ENCODE measurements at regions of chr11 and their contacts with region 1.

Region 1: DNA sequence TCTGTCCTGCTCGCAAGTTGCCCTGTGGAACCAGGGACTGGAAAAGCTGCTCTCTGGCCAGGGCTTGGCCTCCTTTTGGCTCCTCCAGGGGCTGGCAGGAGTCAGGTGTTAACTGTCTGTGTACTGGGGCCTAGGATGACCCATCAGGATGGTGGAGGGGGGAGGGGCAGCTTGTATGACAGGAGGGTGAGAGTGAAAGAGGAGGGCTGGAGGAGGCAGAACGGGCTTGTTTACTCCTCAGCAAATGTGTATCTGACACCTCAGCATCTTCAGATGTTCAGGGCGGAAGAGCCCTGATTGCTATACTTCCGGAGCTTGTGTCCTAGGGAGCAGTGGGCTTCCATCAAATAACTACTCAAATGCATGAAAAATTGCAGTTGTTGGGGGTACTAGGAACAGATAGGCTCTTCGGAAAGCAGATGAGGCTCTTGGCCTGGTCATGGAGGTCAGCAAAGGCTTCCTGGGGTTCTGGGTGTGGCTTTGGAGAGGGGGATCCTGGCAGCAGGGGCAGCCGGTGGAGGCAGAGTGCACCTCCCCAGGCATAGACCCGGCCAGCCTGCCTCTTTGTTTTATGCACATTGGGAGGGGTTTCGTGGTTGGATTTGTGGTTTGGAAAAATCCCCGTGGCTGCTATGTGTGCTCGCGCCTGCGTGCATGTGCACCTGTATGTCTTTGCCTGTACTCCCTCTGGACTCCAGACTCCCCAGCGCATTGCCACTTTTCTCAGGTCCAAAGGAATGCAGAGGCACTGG is 31.2 kb downstream of the CD82 start:
- DNase-seq: peak; percentile 77
- ATAC-seq: peak; percentile 86
- H3K4me3 Mint-ChIP-seq: peak overlapping the region; percentile 50
- H3K27ac Mint-ChIP-seq: peak overlapping the region; percentile 90
- H3K4me1 Mint-ChIP-seq: peaks cover 65% of the 10 kb centered on the region
- H3K27me3 Mint-ChIP-seq: no peaks in the 10 kb centered on the region

Region 2: GRCh38 chr11:44565211-44565952 is 31.3 kb before region 1 on chr11 and contains the start of gene CD82:
- CTCF ChIA-PET with region 1: interaction called, 10 read pairs
- POLR2A ChIA-PET with region 1: interaction called, 15 read pairs
- DNase-seq: peak; percentile 99
- ATAC-seq: peak; percentile 88
- H3K4me3 Mint-ChIP-seq: peak within 1 kb of the TSS; percentile 87
- H3K27ac Mint-ChIP-seq: peak within 1 kb of the TSS; percentile 84
- H3K4me1 Mint-ChIP-seq: peaks cover 72% of the 10 kb centered on the region
- H3K27me3 Mint-ChIP-seq: no peaks in the 10 kb centered on the region
- total RNA-seq, gene CD82: 68.2 to 72.9 TPM

Region 3: DNA sequence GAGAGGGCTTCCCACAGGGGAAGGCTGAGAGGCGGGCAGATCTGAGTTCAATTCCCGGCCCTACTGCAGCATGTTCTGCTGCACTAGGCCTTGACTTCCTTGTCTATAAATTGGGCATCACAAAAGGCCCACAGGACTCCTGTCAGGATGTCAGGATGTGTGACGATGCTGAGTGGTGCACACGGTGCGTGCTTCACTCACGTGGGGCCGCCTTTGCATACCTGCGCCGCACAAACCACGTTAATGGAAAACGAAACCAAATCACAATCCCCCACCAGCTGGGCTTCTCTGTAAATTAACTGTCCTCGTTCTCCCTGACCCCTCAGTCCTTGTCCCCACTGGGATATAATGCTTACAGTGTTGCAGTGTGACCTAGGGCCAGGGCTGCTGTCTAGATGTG is 97.7 kb after region 1 on chr11:
- CTCF ChIA-PET with region 1: no interaction called
- POLR2A ChIA-PET with region 1: no interaction called
- DNase-seq: no peak
- ATAC-seq: no peak
- H3K4me3 Mint-ChIP-seq: no peak overlapping the region
- H3K27ac Mint-ChIP-seq: no peak overlapping the region
- H3K4me1 Mint-ChIP-seq: peaks cover 8% of the 10 kb centered on the region
- H3K27me3 Mint-ChIP-seq: peaks cover 10% of the 10 kb centered on the region

Measured in activated CD8-positive, alpha-beta T cell treated with anti-CD3 and anti-CD28 coated beads, Interleukin-2, amount 10 ng/mL, durations not matched to agents 7 days and 5 days (primary cell).